ENCODE measurements at regions of chrX and their contacts with region 1.

Region 1: GRCh38 chrX:10922158-10922557 is 189.0 kb upstream of the HCCS start:
- DNase-seq: peak; percentile 84
- H3K4me3 ChIP-seq: no peak overlapping the region
- H3K27ac ChIP-seq: peak overlapping the region; percentile 60
- H3K4me1 ChIP-seq: peaks cover 17% of the 10 kb centered on the region
- H3K27me3 ChIP-seq: no peaks in the 10 kb centered on the region
- CTCF ChIP-seq: no peak
- POLR2A ChIP-seq: no peak

Region 2: GRCh38 chrX:10709276-10709675 is 212.9 kb before region 1 on chrX:
- CTCF ChIA-PET with region 1: no interaction called
- POLR2A ChIA-PET with region 1: no interaction called
- dilution Hi-C with region 1: no loop called
- intact Hi-C with region 1: no loop called
- DNase-seq: no peak
- H3K4me3 ChIP-seq: no peak overlapping the region
- H3K27ac ChIP-seq: no peak overlapping the region
- H3K4me1 ChIP-seq: no peaks in the 10 kb centered on the region
- H3K27me3 ChIP-seq: no peaks in the 10 kb centered on the region
- CTCF ChIP-seq: no peak
- POLR2A ChIP-seq: no peak

Region 3: DNA sequence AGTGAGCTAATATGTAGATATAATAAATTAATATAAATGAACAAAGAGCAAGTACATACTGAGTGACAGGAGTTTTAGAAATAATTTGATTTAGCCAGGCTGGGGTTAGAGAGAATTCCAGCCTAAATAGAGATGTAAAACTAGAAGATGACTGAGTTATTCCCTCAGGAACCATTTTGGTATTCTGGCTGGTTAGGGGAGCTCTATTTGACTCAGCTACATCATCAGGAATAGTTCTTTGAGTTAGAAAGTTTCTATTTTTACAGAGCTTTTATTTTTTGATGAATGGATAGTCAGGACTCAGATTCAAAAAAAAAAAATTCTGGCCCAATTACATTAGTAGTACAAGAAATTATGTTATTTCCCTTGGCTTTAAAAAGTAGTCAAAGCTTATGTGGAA is 121.4 kb before region 1 on chrX:
- CTCF ChIA-PET with region 1: no interaction called
- POLR2A ChIA-PET with region 1: no interaction called
- dilution Hi-C with region 1: no loop called
- intact Hi-C with region 1: no loop called
- DNase-seq: no peak
- H3K4me3 ChIP-seq: no peak overlapping the region
- H3K27ac ChIP-seq: no peak overlapping the region
- H3K4me1 ChIP-seq: no peaks in the 10 kb centered on the region
- H3K27me3 ChIP-seq: no peaks in the 10 kb centered on the region
- CTCF ChIP-seq: no peak
- POLR2A ChIP-seq: no peak

Region 4: GRCh38 chrX:10884246-10884645 is 37.9 kb before region 1 on chrX:
- CTCF ChIA-PET with region 1: no interaction called
- POLR2A ChIA-PET with region 1: no interaction called
- dilution Hi-C with region 1: no loop called
- intact Hi-C with region 1: no loop called
- DNase-seq: no peak
- H3K4me3 ChIP-seq: no peak overlapping the region
- H3K27ac ChIP-seq: no peak overlapping the region
- H3K4me1 ChIP-seq: no peaks in the 10 kb centered on the region
- H3K27me3 ChIP-seq: no peaks in the 10 kb centered on the region
- CTCF ChIP-seq: no peak
- POLR2A ChIP-seq: no peak

Region 5: GRCh38 chrX:10900585-10901289 is 21.4 kb before region 1 on chrX:
- CTCF ChIA-PET with region 1: no interaction called
- POLR2A ChIA-PET with region 1: no interaction called
- dilution Hi-C with region 1: no loop called
- intact Hi-C with region 1: loop called (anchors 2 kb)
- DNase-seq: no peak
- H3K4me3 ChIP-seq: no peak overlapping the region
- H3K27ac ChIP-seq: no peak overlapping the region
- H3K4me1 ChIP-seq: peaks cover 6% of the 10 kb centered on the region
- H3K27me3 ChIP-seq: no peaks in the 10 kb centered on the region
- CTCF ChIP-seq: no peak
- POLR2A ChIP-seq: no peak

Region 6: GRCh38 chrX:10952619-10953018 is 30.5 kb after region 1 on chrX:
- CTCF ChIA-PET with region 1: no interaction called
- POLR2A ChIA-PET with region 1: no interaction called
- dilution Hi-C with region 1: no loop called
- intact Hi-C with region 1: no loop called
- DNase-seq: no peak
- H3K4me3 ChIP-seq: no peak overlapping the region
- H3K27ac ChIP-seq: no peak overlapping the region
- H3K4me1 ChIP-seq: no peaks in the 10 kb centered on the region
- H3K27me3 ChIP-seq: no peaks in the 10 kb centered on the region
- CTCF ChIP-seq: no peak
- POLR2A ChIP-seq: no peak

Measured in endothelial cell of umbilical vein (primary cell).